IMR-90 (cell line): ENCODE measurements at regions of chr12 and their contacts with region 1.

Region 1: GRCh38 chr12:46944088-46944487 is 118.3 kb upstream of the SLC38A4 start:
- DNase-seq: peak; percentile 82
- ATAC-seq: no peak
- H3K4me3 ChIP-seq: no peak overlapping the region
- H3K27ac ChIP-seq: no peak overlapping the region
- H3K4me1 ChIP-seq: peaks cover 10% of the 10 kb centered on the region
- H3K27me3 ChIP-seq: no peaks in the 10 kb centered on the region
- CTCF ChIP-seq: peak; percentile 33
- POLR2A ChIP-seq: no peak
- RAD21 ChIP-seq: no peak

Region 2: DNA sequence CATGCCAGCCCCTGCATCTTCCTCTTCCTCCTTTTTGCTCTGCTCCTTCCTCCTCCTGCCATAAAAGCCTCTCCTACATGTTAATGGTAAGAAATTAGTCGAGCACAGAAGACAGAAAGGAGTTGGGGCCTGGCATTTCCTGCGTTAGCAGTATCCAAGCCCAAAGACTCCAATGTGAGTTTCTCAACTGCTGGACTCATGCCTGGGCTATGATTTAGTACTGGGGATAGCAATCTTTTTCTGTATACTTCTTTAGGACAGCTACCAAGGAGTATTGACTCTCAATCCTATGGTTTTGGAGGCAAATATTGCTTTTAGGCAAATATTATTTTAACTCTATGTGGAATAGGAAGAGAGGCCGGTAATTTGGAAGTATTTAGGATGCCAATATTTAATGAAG is 100.3 kb before region 1 on chr12:
- CTCF ChIA-PET with region 1: no interaction called
- POLR2A ChIA-PET with region 1: no interaction called
- dilution Hi-C with region 1: no loop called
- in situ Hi-C with region 1: no loop called
- intact Hi-C with region 1: no loop called
- DNase-seq: peak; percentile 58
- ATAC-seq: peak; percentile 77
- H3K4me3 ChIP-seq: no peak overlapping the region
- H3K27ac ChIP-seq: no peak overlapping the region
- H3K4me1 ChIP-seq: peaks cover 8% of the 10 kb centered on the region
- H3K27me3 ChIP-seq: no peaks in the 10 kb centered on the region
- CTCF ChIP-seq: no peak
- POLR2A ChIP-seq: no peak
- RAD21 ChIP-seq: no peak

Region 3: GRCh38 chr12:46983393-46984266 is 39.5 kb after region 1 on chr12:
- CTCF ChIA-PET with region 1: interaction called, 23 read pairs
- POLR2A ChIA-PET with region 1: no interaction called
- dilution Hi-C with region 1: no loop called
- in situ Hi-C with region 1: no loop called
- intact Hi-C with region 1: no loop called
- DNase-seq: peak; percentile 75
- ATAC-seq: peak; percentile 98
- H3K4me3 ChIP-seq: no peak overlapping the region
- H3K27ac ChIP-seq: no peak overlapping the region
- H3K4me1 ChIP-seq: no peaks in the 10 kb centered on the region
- H3K27me3 ChIP-seq: no peaks in the 10 kb centered on the region
- CTCF ChIP-seq: peak; percentile 85
- POLR2A ChIP-seq: no peak
- RAD21 ChIP-seq: peak; percentile 89